ENCODE measurements at regions of chr12 and their contacts with region 1.

Region 1: DNA sequence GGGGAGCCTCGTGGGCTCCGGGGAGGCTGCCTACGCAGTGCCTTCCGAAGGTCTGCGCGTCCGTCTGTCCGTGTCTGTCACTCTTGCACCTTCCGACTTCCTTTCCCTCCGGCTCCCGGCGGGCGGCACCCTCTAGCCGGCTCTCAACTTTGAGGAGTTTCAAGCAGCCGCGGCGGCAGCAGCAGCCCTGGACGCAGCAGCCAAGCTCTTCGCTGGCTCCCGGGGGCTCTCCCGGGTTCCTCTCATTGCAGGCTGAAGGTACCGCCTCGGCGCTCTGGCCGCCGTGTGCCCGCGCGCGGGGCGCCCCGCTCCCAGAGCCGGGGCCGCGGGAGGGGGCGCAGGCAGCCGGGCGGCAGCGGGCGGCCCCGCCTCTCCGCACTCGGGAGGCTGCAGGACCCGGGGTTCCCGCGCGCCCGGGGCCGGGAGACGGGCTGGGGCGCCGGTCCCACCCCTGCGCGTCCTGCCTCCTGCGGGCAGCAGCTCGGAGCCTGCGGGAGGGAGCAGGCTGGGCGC is at the starts of genes AMIGO2 and PCED1B:
- DNase-seq: peak; percentile 68
- ATAC-seq: peak; percentile 50
- H3K4me3 ChIP-seq: peak within 1 kb of the TSS; percentile 74 to 92 (median 83)
- H3K4me3 Mint-ChIP-seq: peak within 1 kb of the TSS; percentile 98
- H3K27ac ChIP-seq: peak within 1 kb of the TSS; percentile 53 to 78
- H3K27ac Mint-ChIP-seq: peak within 1 kb of the TSS; percentile 91
- H3K4me1 ChIP-seq: peaks cover 17 to 29% of the 10 kb centered on the region in 2 donors
- H3K4me1 Mint-ChIP-seq: peaks cover 59% of the 10 kb centered on the region
- H3K27me3 ChIP-seq: no peaks in the 10 kb centered on the region
- H3K27me3 Mint-ChIP-seq: no peaks in the 10 kb centered on the region
- CTCF ChIP-seq: no peak
- total RNA-seq, gene AMIGO2: 9.2 and 10.4 TPM in 2 replicates
- total RNA-seq, gene PCED1B: 45.8 and 48.0 TPM in 2 replicates

Region 2: GRCh38 chr12:47139000-47139681 is 59.6 kb after region 1 on chr12:
- CTCF ChIA-PET with region 1: no interaction called
- POLR2A ChIA-PET with region 1: no interaction called
- intact Hi-C with region 1: loop called (anchors 10 kb)
- DNase-seq: no peak
- ATAC-seq: no peak
- H3K4me3 ChIP-seq: no peak overlapping the region
- H3K4me3 Mint-ChIP-seq: no peak overlapping the region
- H3K27ac ChIP-seq: no peak overlapping the region
- H3K27ac Mint-ChIP-seq: no peak overlapping the region
- H3K4me1 ChIP-seq: peaks cover 0 to 3% of the 10 kb centered on the region in 2 donors
- H3K4me1 Mint-ChIP-seq: peaks cover 7% of the 10 kb centered on the region
- H3K27me3 ChIP-seq: no peaks in the 10 kb centered on the region
- H3K27me3 Mint-ChIP-seq: no peaks in the 10 kb centered on the region
- CTCF ChIP-seq: no peak

Region 3: DNA sequence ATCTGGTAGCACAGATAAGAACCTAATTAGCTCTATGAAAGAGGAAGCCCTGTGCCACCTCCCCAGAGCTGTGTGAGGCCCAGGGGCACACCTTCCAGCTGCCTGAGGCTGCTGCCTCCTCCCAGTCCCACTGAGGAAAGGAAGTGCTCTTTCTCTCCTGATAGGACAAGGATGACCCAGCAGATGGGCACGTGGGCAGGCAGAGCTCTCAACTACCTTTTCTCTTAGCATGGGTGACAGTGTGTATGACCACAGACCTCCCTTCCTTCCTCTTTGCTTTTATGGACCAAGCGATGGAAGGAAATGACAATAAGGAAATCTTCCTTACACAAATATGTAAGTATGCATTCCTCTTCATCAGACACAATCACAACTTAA is 127.8 kb after region 1 on chr12:
- CTCF ChIA-PET with region 1: interaction called, 13 read pairs
- POLR2A ChIA-PET with region 1: interaction called, 6 read pairs
- intact Hi-C with region 1: no loop called
- DNase-seq: peak; percentile 87
- ATAC-seq: peak; percentile 85
- H3K4me3 ChIP-seq: peak overlapping the region in 2 of 5 experiments; percentile 7 to 31
- H3K4me3 Mint-ChIP-seq: peak overlapping the region; percentile 75
- H3K27ac ChIP-seq: peak overlapping the region; percentile 78 to 84
- H3K27ac Mint-ChIP-seq: peak overlapping the region; percentile 94
- H3K4me1 ChIP-seq: peaks cover 71 to 80% of the 10 kb centered on the region in 2 donors
- H3K4me1 Mint-ChIP-seq: peaks cover 77% of the 10 kb centered on the region
- H3K27me3 ChIP-seq: no peaks in the 10 kb centered on the region
- H3K27me3 Mint-ChIP-seq: no peaks in the 10 kb centered on the region
- CTCF ChIP-seq: no peak